Activated CD4-positive, alpha-beta T cell treated with anti-CD3 and anti-CD28 coated beads, Interleukin-2, amount 10 ng/mL, durations not matched to agents 24 days and 14 days (primary cell): ENCODE measurements at regions of chr2 and their contacts with region 1.

Region 1: GRCh38 chr2:147843864-147844696 is 749 bp upstream of the ACVR2A start:
- DNase-seq: peak; percentile 96
- H3K4me3 Mint-ChIP-seq: peak overlapping the region; percentile 93
- H3K27ac Mint-ChIP-seq: peak overlapping the region; percentile 88
- H3K4me1 Mint-ChIP-seq: peaks cover 26% of the 10 kb centered on the region
- H3K27me3 Mint-ChIP-seq: peaks cover 54% of the 10 kb centered on the region

Region 2: DNA sequence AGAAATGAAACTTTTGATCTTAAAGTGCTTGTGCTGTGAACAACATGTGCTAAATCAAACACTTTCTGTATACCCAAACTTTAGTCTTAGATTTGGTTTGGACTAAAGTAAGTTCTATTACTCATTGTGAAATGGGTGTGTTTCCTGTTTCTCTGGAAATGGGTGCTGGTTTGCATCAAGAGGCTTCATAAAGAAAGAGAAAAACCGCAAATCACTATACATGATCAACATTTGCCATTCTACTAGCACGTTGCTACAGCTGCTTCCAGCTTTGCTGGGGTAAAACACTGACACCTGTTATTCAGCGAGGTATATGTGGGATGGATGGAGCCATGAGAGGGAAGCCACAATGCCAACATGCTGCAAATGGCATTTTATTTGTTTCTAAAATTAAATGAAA is 546.3 kb before region 1 on chr2:
- intact Hi-C with region 1: loop called (anchors 1 kb)
- DNase-seq: peak; percentile 85
- H3K4me3 Mint-ChIP-seq: peak overlapping the region; percentile 34
- H3K27ac Mint-ChIP-seq: peak overlapping the region; percentile 83
- H3K4me1 Mint-ChIP-seq: peaks cover 52% of the 10 kb centered on the region
- H3K27me3 Mint-ChIP-seq: no peaks in the 10 kb centered on the region

Region 3: GRCh38 chr2:147499785-147500184 is 344.3 kb before region 1 on chr2:
- intact Hi-C with region 1: loop called (anchors 5 kb)
- DNase-seq: no peak
- H3K4me3 Mint-ChIP-seq: peak overlapping the region; percentile 55
- H3K27ac Mint-ChIP-seq: peak overlapping the region; percentile 87
- H3K4me1 Mint-ChIP-seq: peaks cover 59% of the 10 kb centered on the region
- H3K27me3 Mint-ChIP-seq: no peaks in the 10 kb centered on the region

Region 4: GRCh38 chr2:147663153-147663961 is 180.7 kb before region 1 on chr2:
- intact Hi-C with region 1: loop called (anchors 1 kb)
- DNase-seq: peak; percentile 77
- H3K4me3 Mint-ChIP-seq: peak overlapping the region; percentile 55
- H3K27ac Mint-ChIP-seq: peak overlapping the region; percentile 82
- H3K4me1 Mint-ChIP-seq: peaks cover 24% of the 10 kb centered on the region
- H3K27me3 Mint-ChIP-seq: no peaks in the 10 kb centered on the region

Region 5: DNA sequence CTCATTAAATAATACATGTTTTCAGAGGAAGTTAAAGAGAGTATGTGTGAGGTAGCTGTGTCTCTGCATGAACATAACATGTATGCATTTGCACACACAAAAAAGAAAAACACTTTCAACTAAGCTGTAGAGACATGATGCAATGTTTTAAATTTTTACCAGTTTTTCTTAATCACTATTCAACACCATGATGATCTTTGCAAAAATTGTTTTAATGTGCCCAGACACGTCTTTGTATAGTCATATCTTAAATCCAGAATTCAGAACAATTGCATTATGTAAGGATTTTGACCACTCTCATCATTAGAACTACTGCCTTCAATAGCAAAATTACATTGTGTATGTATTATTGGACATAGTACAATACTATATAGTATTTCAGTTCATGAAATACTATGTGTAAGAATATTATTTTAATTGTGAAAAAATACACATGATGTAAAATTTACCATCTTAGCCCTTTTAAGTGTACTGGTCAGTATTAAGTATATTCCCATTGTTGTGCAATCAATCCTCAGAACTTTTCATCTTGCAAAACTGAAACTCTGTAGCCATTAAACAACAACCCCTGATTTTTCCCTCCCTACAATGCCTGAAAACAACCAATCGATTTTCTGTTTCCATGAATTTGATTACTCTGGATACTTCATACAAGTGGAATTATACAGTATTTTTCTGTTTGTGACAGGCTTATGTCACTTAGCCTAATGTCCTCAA is 103.7 kb before region 1 on chr2:
- intact Hi-C with region 1: no loop called
- DNase-seq: no peak
- H3K4me3 Mint-ChIP-seq: no peak overlapping the region
- H3K27ac Mint-ChIP-seq: no peak overlapping the region
- H3K4me1 Mint-ChIP-seq: no peaks in the 10 kb centered on the region
- H3K27me3 Mint-ChIP-seq: no peaks in the 10 kb centered on the region

Region 6: DNA sequence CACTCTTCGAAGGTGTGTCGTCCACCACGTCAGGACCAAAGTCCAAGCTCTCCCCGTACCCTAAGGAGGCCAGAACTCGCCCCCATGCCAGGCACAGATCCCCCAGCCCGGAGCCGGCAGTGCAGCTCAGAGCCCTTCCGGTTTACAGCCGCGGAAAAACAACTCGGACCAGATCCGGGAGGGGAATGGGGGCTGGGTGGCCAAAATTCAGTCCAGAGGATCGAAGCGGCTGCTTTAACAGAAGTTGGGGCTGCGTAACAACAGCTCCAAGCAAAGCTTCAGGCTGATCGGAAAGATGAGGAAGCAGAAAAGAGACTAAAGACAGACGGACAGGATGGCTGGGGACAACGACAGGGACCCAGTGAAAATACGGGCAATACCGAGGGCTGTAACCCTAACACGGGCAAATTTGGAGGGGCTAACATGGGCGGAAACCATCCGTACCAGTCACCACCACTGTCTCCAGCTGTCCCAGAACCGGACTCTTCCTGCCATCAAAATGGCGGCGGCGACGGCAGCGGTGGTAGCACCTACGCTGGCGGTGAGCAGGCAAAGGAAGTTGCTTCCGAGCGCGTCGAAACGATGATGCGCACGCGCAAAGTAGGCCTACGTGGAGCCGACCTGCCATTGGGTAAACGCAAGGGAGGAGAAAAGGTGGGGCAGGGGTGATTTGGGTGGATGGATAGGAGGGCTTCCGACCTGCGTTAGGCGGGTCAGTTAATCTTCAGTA is 1743.3 kb after region 1 on chr2 and contains the start of gene MMADHC:
- intact Hi-C with region 1: loop called (anchors 10 kb)
- DNase-seq: peak; percentile 98
- H3K4me3 Mint-ChIP-seq: peak within 1 kb of the TSS; percentile 97
- H3K27ac Mint-ChIP-seq: peak within 1 kb of the TSS; percentile 100
- H3K4me1 Mint-ChIP-seq: peaks cover 32% of the 10 kb centered on the region
- H3K27me3 Mint-ChIP-seq: peaks cover 21% of the 10 kb centered on the region
- total RNA-seq, gene MMADHC: 131 and 136 TPM in 2 replicates